ENCODE measurements at regions of chr3 and their contacts with region 1.

Region 1: DNA sequence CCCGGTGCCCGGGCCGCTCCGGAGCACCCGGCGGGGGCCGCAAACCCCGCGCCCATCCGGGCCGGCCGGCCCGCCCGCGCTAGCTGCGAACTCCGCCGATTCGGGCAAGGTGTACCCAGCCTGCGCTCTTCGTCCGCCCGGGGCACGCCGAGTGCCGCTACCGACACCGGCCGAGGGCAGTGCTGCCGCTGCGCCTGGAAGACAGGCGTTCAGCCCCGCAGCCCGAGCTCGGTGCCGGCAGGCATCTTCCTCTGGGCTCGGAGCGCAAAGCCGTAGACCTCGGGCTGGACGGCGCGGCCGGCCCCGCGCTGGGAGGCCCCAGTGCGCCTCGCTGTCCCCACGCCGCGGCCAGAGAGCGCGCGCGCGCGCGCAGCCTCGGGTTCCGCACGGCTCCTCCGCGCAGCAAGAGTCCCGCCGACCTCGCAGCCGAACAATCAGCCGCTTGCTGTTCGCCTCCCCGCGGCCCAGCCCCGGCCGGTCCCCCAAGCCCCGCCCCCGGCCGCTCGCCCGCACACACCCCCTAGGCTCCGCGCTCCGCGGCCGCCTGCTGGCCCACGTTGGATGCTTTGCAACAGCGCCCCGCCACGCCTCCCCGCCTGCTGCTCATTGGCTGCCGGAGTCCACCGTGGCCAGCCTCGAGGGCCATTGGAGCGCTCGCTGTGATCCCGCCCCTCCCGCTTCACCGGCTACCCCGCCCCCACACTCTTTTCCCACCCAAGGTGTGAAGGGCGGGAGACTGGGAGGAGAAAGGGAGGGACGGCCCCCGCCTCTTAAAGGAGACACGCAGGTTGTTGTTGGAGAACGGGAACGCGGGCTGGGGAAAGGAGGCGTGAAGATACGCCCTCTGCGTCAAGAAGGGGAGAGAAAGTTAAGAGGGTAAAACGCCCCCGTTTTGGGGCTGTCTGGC is at the start of gene LRIG1:
- DNase-seq: peak; percentile 99
- ATAC-seq: peak; percentile 97
- H3K4me3 Mint-ChIP-seq: peak within 1 kb of the TSS; percentile 96
- H3K27ac Mint-ChIP-seq: peak within 1 kb of the TSS; percentile 87
- H3K4me1 Mint-ChIP-seq: peaks cover 52% of the 10 kb centered on the region
- H3K27me3 Mint-ChIP-seq: peaks cover 9% of the 10 kb centered on the region
- total RNA-seq, gene LRIG1: 19.1 to 22.7 TPM

Region 2: DNA sequence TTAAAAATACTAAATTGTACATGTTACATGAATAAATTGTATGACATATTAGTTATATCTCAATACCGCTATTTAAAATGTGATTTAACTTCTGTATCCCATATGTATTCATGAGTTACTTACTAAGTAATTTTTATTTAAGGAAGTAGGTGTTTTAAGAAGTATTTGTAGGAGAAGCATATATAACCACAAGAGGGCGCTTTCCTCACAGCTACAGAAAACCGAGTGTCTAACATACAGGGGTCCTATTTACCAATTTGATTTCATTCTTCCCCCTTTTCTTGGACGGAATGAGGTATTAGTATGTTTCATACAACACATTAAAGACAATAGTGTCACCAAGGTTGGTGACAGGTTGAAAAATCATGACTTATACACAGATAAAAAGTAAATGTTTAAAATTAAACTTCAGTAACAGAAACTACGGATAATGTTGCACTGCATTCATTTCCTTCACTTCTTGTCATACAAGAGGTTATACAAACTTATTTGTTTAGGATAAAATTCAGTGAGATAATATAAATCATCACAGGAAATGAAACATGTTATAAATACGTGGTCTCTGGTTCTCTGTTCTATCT is 715.7 kb before region 1 on chr3:
- CTCF ChIA-PET with region 1: no interaction called
- POLR2A ChIA-PET with region 1: no interaction called
- intact Hi-C with region 1: no loop called
- DNase-seq: no peak
- ATAC-seq: no peak
- H3K4me3 Mint-ChIP-seq: no peak overlapping the region
- H3K27ac Mint-ChIP-seq: no peak overlapping the region
- H3K4me1 Mint-ChIP-seq: no peaks in the 10 kb centered on the region
- H3K27me3 Mint-ChIP-seq: no peaks in the 10 kb centered on the region

Region 3: GRCh38 chr3:66236281-66236680 is 264.5 kb before region 1 on chr3:
- CTCF ChIA-PET with region 1: no interaction called
- POLR2A ChIA-PET with region 1: no interaction called
- intact Hi-C with region 1: loop called in 1 of 2 experiments (anchors 5 kb)
- DNase-seq: no peak
- ATAC-seq: no peak
- H3K4me3 Mint-ChIP-seq: no peak overlapping the region
- H3K27ac Mint-ChIP-seq: no peak overlapping the region
- H3K4me1 Mint-ChIP-seq: peaks cover 29% of the 10 kb centered on the region
- H3K27me3 Mint-ChIP-seq: no peaks in the 10 kb centered on the region

Region 4: DNA sequence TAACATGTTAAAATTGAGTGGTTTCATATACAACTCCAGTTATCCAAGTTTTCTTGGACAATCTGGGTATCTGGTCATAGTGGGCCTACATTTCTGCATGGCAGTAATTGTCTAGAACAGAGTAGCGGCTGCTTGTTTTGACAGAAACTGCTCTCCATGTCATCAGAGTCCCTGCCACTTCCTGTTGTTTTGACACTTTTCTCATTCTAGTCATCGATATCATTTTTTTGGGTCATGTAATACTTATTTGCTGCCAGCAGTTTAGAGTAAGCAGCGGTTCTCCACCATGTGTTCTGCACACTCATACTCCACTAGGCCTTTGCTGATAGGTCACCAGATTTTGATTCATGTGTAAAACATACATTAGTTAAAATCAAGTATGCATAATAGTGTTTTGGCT is 198.5 kb before region 1 on chr3:
- CTCF ChIA-PET with region 1: no interaction called
- POLR2A ChIA-PET with region 1: no interaction called
- intact Hi-C with region 1: loop called in 1 of 2 experiments (anchors 1 kb)
- DNase-seq: peak; percentile 52
- ATAC-seq: peak; percentile 85
- H3K4me3 Mint-ChIP-seq: peak overlapping the region; percentile 36
- H3K27ac Mint-ChIP-seq: peak overlapping the region; percentile 93
- H3K4me1 Mint-ChIP-seq: peaks cover 77% of the 10 kb centered on the region
- H3K27me3 Mint-ChIP-seq: no peaks in the 10 kb centered on the region

Region 5: GRCh38 chr3:66816090-66816761 is 315.4 kb after region 1 on chr3:
- CTCF ChIA-PET with region 1: no interaction called
- POLR2A ChIA-PET with region 1: no interaction called
- intact Hi-C with region 1: loop called in 1 of 2 experiments (anchors 10 kb)
- DNase-seq: no peak
- ATAC-seq: peak; percentile 74
- H3K4me3 Mint-ChIP-seq: no peak overlapping the region
- H3K27ac Mint-ChIP-seq: no peak overlapping the region
- H3K4me1 Mint-ChIP-seq: no peaks in the 10 kb centered on the region
- H3K27me3 Mint-ChIP-seq: peaks cover 7% of the 10 kb centered on the region